ENCODE measurements at regions of chr21 and their contacts with region 1.

Region 1: DNA sequence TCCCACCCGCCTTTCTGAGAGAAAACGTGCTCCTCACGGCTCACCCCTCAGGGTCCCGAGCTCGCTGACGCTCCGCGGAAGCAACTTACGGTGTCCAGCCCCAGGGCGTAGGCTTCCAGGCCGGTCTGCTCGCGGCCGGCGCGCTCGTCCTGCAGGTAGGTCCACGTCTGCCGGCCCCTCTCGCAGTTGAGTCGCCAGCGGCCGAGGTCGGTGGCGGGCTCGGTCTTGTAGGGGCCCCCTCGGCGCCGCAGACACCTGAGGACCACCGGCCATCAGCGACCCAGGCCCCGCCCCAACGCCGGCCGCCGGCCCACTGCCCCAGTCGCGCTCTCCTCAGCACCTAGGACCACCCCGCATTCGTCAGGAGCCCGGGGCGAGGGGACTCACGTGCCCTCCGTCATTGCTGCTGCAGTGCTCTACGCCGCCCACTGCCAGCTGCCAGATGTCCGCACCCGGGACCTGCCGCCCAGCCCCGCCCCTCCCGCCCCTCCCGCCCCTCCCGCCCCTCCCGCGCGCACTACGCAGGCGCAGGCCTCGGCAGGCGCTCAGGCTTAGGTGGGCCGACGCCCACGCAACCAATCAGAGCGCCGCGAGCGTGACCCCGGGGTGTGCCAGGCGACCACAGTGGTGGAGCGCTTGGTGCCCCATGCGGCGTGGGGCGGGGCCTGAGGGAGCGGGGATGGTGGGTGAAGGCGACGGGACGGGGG is at the start of gene LSS:
- DNase-seq: peak; percentile 97
- H3K4me3 Mint-ChIP-seq: peak within 1 kb of the TSS; percentile 85
- H3K27ac Mint-ChIP-seq: peak within 1 kb of the TSS; percentile 70
- H3K4me1 Mint-ChIP-seq: peaks cover 35% of the 10 kb centered on the region
- H3K27me3 Mint-ChIP-seq: no peaks in the 10 kb centered on the region
- total RNA-seq, gene LSS: 22.7 to 22.8 TPM

Region 2: DNA sequence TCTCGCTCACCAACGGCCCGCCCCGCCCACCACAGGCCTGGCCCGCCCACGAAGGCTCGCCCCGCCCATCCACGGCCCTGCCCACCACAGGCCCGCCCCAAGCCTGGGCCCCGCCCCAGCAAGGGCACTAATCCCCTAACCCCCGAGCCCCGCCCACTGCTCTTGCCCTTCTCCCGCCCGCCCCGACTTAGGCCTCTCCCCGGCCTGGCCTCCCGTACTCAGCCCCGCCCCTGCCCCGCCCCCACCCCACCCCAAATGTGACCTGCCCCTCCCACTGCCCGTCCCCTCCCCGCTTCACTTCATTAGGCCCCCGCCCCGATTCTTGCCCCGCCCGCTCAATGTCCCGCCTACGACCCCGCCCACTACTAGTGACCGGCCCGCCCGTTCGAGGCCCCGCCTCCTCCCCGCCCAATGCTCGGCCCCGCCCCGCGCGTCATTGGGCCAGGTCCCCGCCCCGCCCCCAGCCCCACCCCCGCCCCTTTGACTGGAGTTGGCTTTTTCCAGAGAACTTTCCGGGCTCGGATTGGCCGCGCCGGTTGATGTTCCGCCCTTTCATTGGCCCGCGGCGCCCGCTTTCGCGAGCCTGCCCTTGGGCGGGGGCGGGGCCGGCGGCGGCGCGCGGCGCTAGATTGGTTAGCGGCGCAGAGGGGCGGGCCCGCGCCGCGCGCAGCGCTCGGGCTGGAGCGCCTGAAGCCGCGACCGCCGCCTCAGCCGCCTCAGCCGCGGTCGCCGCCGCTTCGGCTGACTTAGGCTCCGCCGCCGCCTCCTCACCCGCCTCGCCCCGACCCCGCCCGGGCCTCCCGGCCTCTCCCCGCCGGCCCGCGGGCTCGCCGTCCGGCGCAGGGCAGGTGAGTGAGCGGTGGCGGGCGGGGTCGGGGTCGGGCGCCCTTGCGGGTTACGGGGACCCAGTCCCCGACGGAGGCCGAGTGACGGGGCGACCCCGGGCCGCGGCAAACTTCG is 585.2 kb before region 1 on chr21 and contains the start of gene PCBP3:
- CTCF ChIA-PET with region 1: no interaction called
- POLR2A ChIA-PET with region 1: no interaction called
- intact Hi-C with region 1: loop called (anchors 5 kb)
- DNase-seq: peak; percentile 98
- H3K4me3 Mint-ChIP-seq: peak within 1 kb of the TSS; percentile 71
- H3K27ac Mint-ChIP-seq: peak within 1 kb of the TSS; percentile 49
- H3K4me1 Mint-ChIP-seq: peaks cover 25% of the 10 kb centered on the region
- H3K27me3 Mint-ChIP-seq: peaks cover 18% of the 10 kb centered on the region
- total RNA-seq, gene PCBP3: 5.3 to 6.6 TPM